ENCODE measurements at regions of chr7 and their contacts with region 1.

Region 1: GRCh38 chr7:29091715-29092114 is 54.6 kb downstream of the CPVL start:
- DNase-seq: peak in 2 of 3 donors; percentile 73 to 76
- H3K4me3 ChIP-seq: peak overlapping the region in 5 of 7 experiments; percentile 44 to 69 (median 52)
- H3K27ac ChIP-seq: peak overlapping the region in 1 of 2 experiments; percentile 53
- H3K4me1 ChIP-seq: peaks cover 5 to 27% (median 18%) of the 10 kb centered on the region in 4 experiments
- H3K27me3 ChIP-seq: no peaks in the 10 kb centered on the region

Region 2: DNA sequence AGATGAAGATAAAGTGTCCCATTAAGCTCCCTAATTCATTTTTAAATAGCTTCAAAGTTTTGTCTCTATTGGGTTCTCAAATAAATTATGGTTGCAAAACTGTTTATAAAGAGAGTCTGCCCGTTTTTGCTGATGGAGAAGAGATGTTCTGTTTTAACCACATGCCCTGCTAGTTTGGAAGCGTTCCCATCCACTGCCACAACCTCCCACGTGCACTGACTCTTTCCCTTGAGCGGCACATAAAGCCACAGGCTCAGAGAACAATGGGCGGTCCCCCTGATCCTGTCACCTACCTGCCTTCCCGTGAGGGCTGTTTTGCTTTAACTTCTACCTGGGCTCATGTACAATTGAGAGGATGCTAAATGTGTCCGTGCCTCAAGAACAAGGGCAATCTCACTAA is 10.9 kb before region 1 on chr7:
- CTCF ChIA-PET with region 1: interaction called, 12 read pairs
- POLR2A ChIA-PET with region 1: no interaction called
- DNase-seq: peak in 2 of 3 donors; percentile 17 to 55
- H3K4me3 ChIP-seq: no peak overlapping the region
- H3K27ac ChIP-seq: no peak overlapping the region
- H3K4me1 ChIP-seq: peaks cover 0 to 13% (median 8%) of the 10 kb centered on the region in 4 experiments
- H3K27me3 ChIP-seq: peaks cover 0 to 2% (median 0%) of the 10 kb centered on the region in 5 experiments